Aorta (tissue), 5 donors: ENCODE measurements at regions of chr12 and their contacts with region 1.

Region 1: GRCh38 chr12:31274520-31275300 is 51.2 kb downstream of the SINHCAF start:
- DNase-seq: no peak
- ATAC-seq: no peak
- H3K4me3 ChIP-seq: no peak overlapping the region
- H3K27ac ChIP-seq: no peak overlapping the region
- H3K4me1 ChIP-seq: no peaks in the 10 kb centered on the region
- H3K27me3 ChIP-seq: no peaks in the 10 kb centered on the region

Region 2: DNA sequence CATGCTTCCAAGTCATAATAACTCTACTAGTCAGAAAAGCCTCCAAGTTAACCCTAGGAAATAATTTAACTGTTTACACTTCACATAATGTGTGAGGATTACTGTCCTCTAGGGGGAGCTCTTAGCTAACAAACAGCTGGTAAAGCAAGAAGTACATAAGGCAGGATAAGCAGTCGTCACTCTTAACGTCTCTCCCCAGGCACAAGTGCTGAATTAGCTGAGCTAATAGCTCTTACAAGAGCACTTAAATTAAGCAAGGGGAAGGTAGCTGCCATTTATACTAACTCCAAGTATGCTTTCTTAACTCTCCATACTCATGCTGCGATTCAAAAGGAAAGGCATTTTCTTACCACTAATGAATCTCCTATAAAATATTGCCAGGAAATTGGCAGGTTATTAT is 427.5 kb before region 1 on chr12:
- intact Hi-C with region 1: loop called (anchors 5 kb)
- DNase-seq: no peak
- ATAC-seq: no peak
- H3K4me3 ChIP-seq: no peak overlapping the region
- H3K27ac ChIP-seq: no peak overlapping the region
- H3K4me1 ChIP-seq: no peaks in the 10 kb centered on the region
- H3K27me3 ChIP-seq: no peaks in the 10 kb centered on the region